ENCODE measurements at regions of chr9 and their contacts with region 1.

Region 1: DNA sequence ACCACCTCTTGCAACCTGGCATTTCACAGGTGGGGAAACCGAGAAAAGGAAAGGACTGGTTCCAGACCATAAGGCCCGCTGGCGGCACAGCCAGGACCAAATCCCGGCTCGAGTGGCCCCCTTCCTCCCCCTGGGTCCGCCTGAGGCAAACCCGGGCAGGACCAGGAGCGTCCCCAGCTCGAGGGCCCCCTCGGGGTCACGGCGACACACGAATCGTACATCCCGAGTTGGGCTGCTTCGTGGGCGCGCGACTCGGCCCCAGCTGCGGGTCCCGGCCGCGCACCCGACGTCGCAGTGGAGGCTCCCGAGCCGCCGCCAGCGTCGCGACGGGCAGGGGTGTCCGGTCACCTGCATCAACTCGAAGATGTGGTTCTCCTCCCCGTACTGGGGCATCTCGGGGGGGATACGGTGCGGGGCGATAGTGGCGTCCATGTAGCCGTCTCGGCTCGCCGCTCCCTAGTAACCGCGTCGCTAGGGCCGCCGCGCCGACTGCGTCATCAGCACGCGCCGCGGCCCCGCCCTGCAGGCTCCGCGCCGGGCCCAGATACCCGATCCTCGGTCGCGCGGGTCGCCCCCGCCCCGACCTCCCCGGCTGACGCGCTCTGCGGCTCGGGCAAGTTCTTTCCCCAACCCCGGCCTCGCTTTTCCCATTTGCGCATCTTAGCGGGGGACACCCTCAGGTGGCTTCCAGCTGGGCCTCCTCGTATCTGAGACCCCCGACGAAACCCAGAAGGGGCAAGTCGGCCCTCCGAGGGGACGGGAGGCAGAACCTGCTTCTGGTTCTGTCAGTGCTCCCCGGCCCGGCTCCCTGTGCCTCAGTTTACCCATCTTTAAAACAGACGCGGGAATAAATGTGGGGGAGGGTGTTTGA is at the start of gene AK8:
- DNase-seq: peak; percentile 22 to 87 (median 73)

Region 2: GRCh38 chr9:132367613-132368313 is 510.3 kb before region 1 on chr9:
- intact Hi-C with region 1: loop called (anchors 10 kb)
- DNase-seq: no peak

Region 3: DNA sequence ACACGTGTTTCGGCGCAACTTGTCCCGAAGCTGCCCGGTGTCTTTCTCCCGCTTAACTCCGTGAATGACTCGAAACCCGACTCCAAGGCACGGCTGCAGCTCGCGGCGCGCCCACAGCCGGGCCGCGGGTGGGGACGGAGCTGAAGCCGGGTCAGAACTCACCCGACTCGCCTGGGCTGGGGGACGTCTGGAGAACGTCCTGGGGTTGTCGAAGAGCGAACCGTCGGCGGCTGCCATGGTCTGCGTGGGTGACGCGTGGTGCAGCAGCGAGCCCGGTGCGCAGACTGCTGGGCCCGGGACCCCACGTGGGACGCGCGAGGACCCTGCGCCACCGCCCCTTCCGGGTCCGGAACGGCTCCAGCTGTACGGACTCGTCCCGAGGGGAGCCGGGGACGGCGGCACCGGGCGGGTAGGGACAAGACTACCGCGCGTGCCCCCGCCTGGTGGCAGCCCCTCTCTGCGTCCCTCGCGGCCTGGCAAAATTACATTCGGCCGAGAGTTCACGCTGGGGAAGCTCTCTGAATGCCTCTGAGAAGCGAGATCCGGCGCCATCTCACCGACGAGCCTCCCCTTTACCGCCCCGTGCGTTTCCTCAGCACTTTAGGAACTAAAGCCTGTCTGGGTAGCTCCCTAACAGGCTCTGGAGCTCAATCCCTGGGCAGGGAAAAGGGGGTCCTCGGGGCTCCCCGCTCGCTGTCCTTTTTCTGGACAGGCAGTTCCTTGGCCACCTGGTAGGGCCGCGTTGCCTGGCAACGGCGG is 208.2 kb before region 1 on chr9 and contains the start of gene DDX31:
- intact Hi-C with region 1: loop called (anchors 10 kb)
- DNase-seq: peak; percentile 67 to 95 (median 88)

Region 4: DNA sequence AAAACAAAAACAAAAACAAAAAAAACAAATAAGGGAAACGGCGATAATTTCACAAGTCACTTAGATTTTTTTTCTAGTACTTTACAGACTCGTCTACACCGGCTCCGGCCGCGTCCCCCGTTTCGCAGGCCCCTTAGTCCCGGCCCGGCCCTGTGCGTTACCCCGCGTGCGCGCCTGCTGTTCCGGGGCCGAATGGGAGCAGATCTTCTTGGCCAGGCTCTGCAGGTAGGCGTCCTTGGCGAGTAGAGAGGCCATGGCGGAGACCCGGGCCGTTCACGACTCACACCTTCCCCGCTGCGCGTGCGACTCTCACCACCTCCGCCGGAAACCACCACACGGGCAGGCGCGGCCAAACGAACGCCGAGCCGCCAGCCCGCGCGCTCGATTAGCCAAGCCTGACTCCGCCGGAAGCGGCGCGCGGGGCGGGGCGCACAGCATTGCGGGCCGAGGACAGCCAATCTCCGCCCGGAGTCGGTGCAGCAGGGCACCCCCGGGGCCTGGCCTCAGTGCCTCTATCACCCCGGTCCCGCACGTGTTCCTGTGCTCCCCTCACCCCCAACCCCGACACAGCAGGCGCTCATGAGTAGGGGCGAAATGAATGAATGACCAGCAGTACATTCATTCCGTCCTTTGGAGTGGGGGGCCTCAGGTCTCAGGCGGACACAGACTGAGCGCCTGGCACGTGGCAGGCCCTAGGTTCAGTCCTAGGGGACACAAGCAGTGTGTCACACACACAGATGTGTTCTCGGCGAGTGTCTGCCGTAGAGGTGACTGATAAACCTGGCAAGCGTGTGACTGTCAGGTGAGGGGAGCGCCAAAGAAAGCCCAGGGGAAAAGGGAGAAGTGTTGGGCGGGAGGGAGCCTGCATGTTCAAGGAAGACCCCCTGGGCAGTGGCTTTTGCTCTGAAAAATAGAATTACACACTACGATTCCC is 458.1 kb after region 1 on chr9 and contains the start of gene SURF6:
- intact Hi-C with region 1: no loop called
- DNase-seq: peak; percentile 75 to 97 (median 93)